Common myeloid progenitor, CD34-positive (primary cell): ENCODE measurements at regions of chr20 and their contacts with region 1.

Region 1: GRCh38 chr20:31661625-31662371 is 24.1 kb downstream of the COX4I2 start:
- DNase-seq: peak; percentile 62 to 71 (median 70)
- H3K4me3 ChIP-seq: peak overlapping the region in 6 of 7 experiments; percentile 35 to 78 (median 56)
- H3K27ac ChIP-seq: peak overlapping the region in 1 of 2 experiments; percentile 37
- H3K4me1 ChIP-seq: peaks cover 0 to 37% (median 21%) of the 10 kb centered on the region in 4 experiments
- H3K27me3 ChIP-seq: no peaks in the 10 kb centered on the region

Region 2: DNA sequence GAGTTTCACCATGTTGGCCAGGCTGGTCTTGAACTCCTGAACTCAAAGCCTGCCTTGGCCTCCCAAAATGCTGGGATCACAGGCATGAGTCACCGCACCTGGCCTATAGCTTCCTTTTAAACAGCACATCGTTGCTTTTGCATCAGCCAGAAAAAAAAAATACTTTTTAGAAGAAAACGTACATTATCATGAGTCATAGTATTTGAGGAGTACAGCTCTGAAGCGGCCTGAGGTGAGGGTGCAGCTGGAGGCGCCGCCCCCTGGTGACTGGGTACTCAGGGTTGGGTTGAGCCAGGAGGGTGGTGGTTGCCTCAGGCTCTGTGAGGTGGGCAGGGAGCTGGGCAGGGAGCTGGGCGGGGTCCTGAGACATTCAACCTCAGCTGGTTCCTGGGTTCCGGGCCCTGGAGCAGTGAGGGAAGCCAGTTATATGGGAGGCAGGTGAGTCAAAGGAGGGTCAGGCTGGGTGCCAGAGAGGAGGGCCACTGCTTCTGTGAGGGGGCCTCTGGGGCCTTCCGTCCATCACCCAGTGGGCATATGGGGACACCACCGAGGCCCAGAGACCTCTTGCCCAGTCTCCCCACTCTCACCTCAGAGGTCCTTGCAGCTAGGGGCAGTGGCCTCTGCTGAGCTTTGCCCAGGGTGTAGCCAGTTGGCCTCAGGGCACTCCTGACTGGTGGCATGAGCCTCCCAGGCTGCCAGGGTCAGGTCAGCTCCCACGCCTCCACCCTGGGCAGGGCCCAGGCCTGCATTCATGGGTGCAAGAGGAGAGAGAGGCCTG is 68.4 kb before region 1 on chr20:
- CTCF ChIA-PET with region 1: no interaction called
- POLR2A ChIA-PET with region 1: no interaction called
- DNase-seq: peak in 2 of 3 donors; percentile 68 to 79
- H3K4me3 ChIP-seq: no peak overlapping the region
- H3K27ac ChIP-seq: no peak overlapping the region
- H3K4me1 ChIP-seq: peaks cover 0 to 12% (median 0%) of the 10 kb centered on the region in 4 experiments
- H3K27me3 ChIP-seq: no peaks in the 10 kb centered on the region

Region 3: GRCh38 chr20:31630187-31630790 is 31.5 kb before region 1 on chr20:
- CTCF ChIA-PET with region 1: interaction called, 25 read pairs
- POLR2A ChIA-PET with region 1: no interaction called
- DNase-seq: no peak
- H3K4me3 ChIP-seq: no peak overlapping the region
- H3K27ac ChIP-seq: no peak overlapping the region
- H3K4me1 ChIP-seq: no peaks in the 10 kb centered on the region
- H3K27me3 ChIP-seq: no peaks in the 10 kb centered on the region

Region 4: DNA sequence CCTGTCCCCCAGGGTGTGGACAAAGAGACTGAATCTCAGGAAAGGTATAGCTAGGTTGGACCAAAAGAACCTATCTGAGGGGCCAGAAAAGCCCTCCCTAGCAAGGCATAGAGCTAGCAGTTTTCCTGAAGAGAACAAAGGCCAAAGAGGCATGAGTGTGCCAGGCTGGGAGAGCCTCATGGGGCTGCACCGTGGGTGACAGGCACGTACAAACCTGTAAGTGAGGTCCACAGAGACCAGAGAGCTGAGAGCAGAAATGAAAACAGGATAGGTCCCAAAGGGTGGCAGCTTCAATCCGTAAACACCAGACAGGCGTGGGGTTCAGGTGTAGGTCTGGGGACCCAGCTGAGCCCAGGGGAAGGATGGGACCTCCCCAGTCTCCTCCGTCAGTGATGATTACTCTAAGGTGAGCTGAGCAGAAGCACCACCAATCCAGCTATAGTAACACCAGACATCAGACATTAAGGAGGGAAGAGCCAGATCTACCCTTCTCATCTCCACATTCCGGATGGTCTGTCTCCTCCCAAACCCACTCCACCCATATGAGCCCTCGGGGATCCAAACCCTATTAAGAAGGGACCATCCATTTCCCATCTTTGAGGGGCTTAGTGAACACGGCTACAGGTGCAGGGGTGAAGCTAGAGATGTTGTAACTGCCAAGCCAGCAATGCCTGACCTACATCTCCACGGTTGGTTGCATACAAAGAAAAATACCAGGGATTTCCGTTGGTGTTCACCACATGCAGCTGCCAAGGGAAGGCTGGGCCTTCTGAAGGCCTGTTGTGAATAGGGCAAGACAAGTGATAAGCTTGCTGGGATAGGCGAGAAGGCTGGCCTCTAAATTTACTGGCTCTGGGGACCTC is 22.6 kb after region 1 on chr20:
- CTCF ChIA-PET with region 1: interaction called, 14 read pairs
- POLR2A ChIA-PET with region 1: interaction called, 3 read pairs
- DNase-seq: peak in 2 of 3 donors; percentile 41 to 51
- H3K4me3 ChIP-seq: no peak overlapping the region
- H3K27ac ChIP-seq: peak overlapping the region in 1 of 2 experiments; percentile 9
- H3K4me1 ChIP-seq: peaks cover 0 to 26% (median 20%) of the 10 kb centered on the region in 4 experiments
- H3K27me3 ChIP-seq: no peaks in the 10 kb centered on the region

Region 5: DNA sequence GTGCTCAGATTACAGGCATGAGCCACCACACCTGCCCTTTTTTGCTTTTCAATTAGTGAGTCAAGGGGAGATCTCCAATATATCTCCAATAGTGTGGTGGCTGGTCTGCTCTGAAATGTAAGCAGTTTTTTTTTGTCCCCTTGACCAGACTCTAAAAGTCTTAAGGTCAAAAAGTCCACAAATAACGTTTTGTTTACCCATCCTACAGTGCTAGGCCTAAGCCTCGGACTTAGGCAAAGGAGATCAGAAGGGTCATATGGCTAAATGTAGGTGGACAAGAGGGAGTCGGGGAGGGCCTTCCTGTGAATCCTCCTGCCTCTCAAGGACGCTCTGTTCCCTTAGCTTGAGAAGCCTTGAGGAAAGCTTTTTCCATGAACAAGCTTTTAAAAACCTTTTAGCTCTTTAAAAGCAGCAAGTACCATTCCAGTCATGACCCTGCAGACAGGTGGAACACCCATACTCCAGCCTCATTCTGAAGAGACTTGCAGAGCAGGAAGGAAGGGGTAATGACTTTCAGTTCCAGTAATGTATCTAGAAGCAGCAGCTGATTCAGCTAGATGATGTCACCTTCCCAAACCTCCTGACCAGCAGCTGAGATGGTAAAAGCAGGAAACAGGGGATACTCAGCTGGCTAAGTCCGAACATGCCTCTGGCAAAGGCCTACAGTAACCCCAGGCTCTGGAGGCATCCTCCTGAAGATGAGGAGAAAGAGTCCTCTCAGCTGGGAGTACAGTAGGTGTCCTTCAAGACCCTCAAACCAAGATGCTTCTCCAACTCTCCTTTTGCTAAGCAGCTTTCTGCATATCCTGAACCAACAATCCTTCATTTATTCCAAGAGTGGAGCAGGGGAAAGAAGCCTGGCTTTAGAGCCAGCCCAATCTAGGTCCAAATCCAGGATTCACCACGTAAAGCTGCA is 37.3 kb after region 1 on chr20:
- CTCF ChIA-PET with region 1: interaction called, 43 read pairs
- POLR2A ChIA-PET with region 1: no interaction called
- DNase-seq: peak in 2 of 3 donors; percentile 55 to 69
- H3K4me3 ChIP-seq: peak overlapping the region in 1 of 7 experiments; percentile 30
- H3K27ac ChIP-seq: peak overlapping the region in 1 of 2 experiments; percentile 61
- H3K4me1 ChIP-seq: peaks cover 0 to 34% (median 23%) of the 10 kb centered on the region in 4 experiments
- H3K27me3 ChIP-seq: no peaks in the 10 kb centered on the region

Region 6: DNA sequence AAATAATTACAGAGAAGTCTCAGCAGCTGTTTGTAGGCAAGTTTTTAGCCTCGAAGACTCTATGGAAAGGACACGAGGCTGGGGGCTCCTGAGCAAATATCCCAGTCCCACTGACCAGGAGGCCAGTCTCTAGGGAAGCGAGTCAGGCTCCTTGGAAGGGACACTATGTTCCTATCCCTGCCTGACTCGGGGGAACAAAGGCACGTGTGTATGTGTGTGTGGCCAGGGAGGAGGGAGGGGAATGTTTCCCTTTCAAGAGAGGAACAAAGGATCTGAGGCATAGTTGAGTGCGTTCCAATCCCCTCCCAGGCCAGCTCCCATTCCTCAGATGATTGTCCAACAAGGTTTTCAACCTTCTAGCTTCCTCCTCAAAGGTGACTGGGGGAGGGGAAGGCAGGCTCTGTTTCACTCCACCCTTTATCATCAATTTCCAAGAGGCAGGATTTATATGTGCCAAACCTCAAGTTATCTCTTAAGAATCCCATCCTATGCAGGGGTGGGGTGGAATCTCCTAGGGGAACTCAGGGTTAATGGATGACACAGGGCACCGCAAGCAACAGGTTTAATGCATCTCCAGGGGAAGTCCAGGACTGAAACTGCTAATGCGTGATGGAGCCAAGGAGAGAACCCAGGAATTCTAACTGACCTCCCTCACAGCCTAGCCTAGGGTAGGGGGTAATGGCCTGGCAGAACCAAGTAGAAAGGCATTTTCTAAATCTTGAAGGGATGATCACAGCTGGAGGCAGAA is 50.9 kb after region 1 on chr20:
- CTCF ChIA-PET with region 1: interaction called, 280 read pairs
- POLR2A ChIA-PET with region 1: interaction called, 4 read pairs
- DNase-seq: no peak
- H3K4me3 ChIP-seq: no peak overlapping the region
- H3K27ac ChIP-seq: peak overlapping the region in 1 of 2 experiments; percentile 44
- H3K4me1 ChIP-seq: peaks cover 8 to 36% (median 22%) of the 10 kb centered on the region in 4 experiments
- H3K27me3 ChIP-seq: no peaks in the 10 kb centered on the region

Region 7: DNA sequence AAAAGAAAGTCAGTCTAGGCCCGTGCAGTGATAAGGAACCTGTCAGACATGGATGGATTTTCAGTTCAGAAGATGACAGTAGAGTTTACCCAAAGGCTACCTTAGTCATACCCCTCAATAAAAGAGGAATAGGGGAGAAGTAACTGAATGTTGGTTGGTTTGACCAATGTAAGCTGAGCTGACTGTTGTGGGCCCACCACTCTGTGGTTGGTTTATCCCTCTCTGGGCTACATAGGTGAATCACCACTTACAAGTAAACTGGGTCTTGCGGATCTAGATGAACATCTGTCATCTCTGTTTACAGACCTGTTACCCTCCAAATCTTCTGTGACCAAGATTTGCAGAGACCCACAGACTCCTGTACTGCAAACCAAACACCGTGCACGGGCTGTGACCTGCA is 120.1 kb after region 1 on chr20:
- CTCF ChIA-PET with region 1: no interaction called
- POLR2A ChIA-PET with region 1: no interaction called
- DNase-seq: no peak
- H3K4me3 ChIP-seq: no peak overlapping the region
- H3K27ac ChIP-seq: no peak overlapping the region
- H3K4me1 ChIP-seq: no peaks in the 10 kb centered on the region
- H3K27me3 ChIP-seq: no peaks in the 10 kb centered on the region